ENCODE measurements at regions of chr6 and their contacts with region 1.

Region 1: DNA sequence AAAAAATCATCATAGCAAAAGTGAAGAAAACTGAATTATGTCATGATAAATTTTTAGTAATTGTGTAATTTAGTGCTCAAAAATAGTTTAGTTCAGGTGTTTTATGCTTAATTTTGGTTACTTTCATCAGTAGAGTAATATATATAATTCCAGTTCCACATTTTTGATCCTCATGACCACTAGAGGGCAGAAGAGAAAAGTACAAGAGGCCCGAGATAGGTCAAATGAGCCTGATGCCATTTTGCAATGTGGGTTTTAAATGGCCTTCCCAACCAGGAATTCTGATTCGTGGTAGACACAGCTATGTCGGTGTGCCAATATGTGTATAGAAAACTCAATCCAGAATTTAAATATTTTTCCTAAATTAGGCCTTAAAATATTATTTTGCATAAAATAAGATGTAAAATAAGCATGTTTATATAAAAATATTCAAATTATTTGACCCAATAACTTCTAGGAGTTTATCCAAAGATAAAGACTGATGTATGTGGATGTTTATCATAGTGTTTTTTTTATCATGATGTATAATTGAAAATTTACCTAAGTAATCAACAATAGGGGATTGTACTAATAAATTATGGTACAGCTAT is 159.7 kb upstream of the RPS6KA2 start:
- DNase-seq: no peak
- H3K4me3 ChIP-seq: no peak overlapping the region
- H3K27ac ChIP-seq: no peak overlapping the region
- H3K4me1 ChIP-seq: no peaks in the 10 kb centered on the region
- H3K27me3 ChIP-seq: no peaks in the 10 kb centered on the region
- CTCF ChIP-seq: peak; percentile 46 to 72 (median 54)

Region 2: GRCh38 chr6:166989427-166990032 is 202.7 kb after region 1 on chr6:
- intact Hi-C with region 1: loop called (anchors 2 kb)
- DNase-seq: no peak
- H3K4me3 ChIP-seq: no peak overlapping the region
- H3K27ac ChIP-seq: no peak overlapping the region
- H3K4me1 ChIP-seq: no peaks in the 10 kb centered on the region
- H3K27me3 ChIP-seq: no peaks in the 10 kb centered on the region
- CTCF ChIP-seq: peak in 2 of 3 experiments; percentile 25 to 37

Measured in ascending aorta (tissue), 2 donors.